Activated CD4-positive, alpha-beta T cell treated with anti-CD3 and anti-CD28 coated beads for 36 hours (primary cell): ENCODE measurements at regions of chrX and their contacts with region 1.

Region 1: GRCh38 chrX:48957827-48958634 is 624 bp upstream of the OTUD5 start:
- DNase-seq: peak; percentile 95
- ATAC-seq: peak; percentile 92
- H3K4me3 Mint-ChIP-seq: peak overlapping the region; percentile 93
- H3K27ac Mint-ChIP-seq: peak overlapping the region; percentile 100
- H3K4me1 Mint-ChIP-seq: peaks cover 28% of the 10 kb centered on the region
- H3K27me3 Mint-ChIP-seq: no peaks in the 10 kb centered on the region

Region 2: GRCh38 chrX:48676106-48676892 is 281.7 kb before region 1 on chrX:
- CTCF ChIA-PET with region 1: no interaction called
- POLR2A ChIA-PET with region 1: interaction called, 3 read pairs
- intact Hi-C with region 1: loop called in 1 of 2 experiments (anchors 5 kb)
- DNase-seq: peak; percentile 92
- ATAC-seq: peak; percentile 95
- H3K4me3 Mint-ChIP-seq: peak overlapping the region; percentile 90
- H3K27ac Mint-ChIP-seq: peak overlapping the region; percentile 91
- H3K4me1 Mint-ChIP-seq: peaks cover 19% of the 10 kb centered on the region
- H3K27me3 Mint-ChIP-seq: no peaks in the 10 kb centered on the region

Region 3: DNA sequence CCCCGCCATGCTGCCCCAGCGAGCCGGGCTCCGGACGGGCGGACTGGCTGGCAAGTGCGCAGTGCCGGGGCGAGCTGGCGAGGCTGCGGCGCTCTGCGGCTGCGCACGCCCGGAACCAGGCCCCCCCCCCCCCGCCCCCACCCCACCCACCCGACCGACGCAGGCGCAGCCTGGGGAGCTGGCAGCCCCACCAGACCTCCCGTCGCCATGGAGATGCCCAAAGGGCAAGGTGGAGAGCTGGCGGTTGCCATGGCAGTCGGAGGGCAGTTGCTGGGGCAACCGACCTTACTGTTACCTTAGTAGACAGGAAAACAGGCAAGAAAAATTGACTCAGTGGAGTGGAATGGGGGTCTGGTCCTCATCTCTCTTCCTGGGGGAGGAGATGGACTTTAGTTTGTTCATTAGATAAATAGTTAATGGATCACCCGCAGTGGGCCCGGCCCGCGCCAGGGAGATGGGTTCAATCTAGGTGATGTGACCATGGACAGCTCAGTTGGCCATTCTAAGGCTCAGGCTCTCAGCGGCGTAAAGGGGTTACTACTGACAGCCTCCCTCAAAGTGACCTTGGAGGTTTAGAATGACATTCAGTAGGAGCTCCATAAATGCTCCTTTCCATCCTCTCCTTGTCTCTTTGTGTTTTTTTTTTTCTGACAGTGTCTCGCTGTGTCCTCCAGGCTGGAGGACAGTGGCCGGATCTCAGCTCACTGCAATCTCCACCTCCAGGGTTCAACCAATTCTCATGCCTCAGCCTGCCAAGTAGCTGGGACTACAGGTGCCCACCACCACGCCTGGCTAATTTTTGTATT is 122.3 kb before region 1 on chrX and contains the start of gene PCSK1N:
- CTCF ChIA-PET with region 1: no interaction called
- POLR2A ChIA-PET with region 1: no interaction called
- intact Hi-C with region 1: no loop called
- DNase-seq: peak; percentile 38
- ATAC-seq: peak; percentile 28
- H3K4me3 Mint-ChIP-seq: peak within 1 kb of the TSS; percentile 75
- H3K27ac Mint-ChIP-seq: peak within 1 kb of the TSS; percentile 6
- H3K4me1 Mint-ChIP-seq: peaks cover 13% of the 10 kb centered on the region
- H3K27me3 Mint-ChIP-seq: peaks cover 26% of the 10 kb centered on the region
- total RNA-seq, gene PCSK1N: 1.3 TPM

Region 4: DNA sequence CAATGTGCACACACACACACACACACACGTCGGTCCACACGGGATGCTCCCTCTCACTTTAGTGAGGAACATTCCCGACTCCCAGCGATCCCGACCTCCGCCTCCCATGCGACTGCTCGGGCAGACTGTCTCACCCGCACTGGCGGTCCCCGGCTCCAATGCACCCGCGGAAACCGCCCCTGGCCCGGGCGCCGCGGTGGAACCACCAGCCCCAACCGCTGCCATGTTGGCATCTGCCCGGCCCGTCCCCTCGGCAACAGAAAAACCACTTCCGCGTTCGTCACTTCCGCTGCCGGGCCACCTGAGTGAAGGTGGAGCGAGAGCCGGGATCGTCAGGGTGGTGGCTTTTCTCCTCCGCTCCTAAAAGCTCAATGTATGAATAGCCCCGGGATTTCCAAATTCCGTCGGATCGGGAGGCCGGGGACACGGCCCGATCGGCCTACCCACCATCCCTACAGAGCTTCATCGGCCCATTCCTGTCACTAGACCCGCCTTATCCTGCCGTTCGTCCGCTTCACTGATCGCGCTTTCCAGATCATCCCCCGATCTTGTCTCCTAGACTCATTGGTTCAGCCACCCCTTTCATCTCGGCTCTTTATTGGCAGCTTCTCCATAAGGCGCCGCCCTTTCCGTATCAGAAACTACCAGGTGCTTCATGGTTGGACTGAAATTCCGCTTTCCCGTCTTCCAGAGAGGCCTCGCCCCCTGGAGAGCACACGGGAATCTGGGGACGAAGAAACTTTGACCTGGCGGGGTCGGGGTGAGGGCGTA is 46.4 kb before region 1 on chrX and contains the start of gene SLC35A2:
- CTCF ChIA-PET with region 1: no interaction called
- POLR2A ChIA-PET with region 1: interaction called, 7 read pairs
- intact Hi-C with region 1: loop called in 1 of 2 experiments (anchors 1 kb)
- DNase-seq: peak; percentile 93
- ATAC-seq: peak; percentile 69
- H3K4me3 Mint-ChIP-seq: peak within 1 kb of the TSS; percentile 97
- H3K27ac Mint-ChIP-seq: peak within 1 kb of the TSS; percentile 92
- H3K4me1 Mint-ChIP-seq: peaks cover 39% of the 10 kb centered on the region
- H3K27me3 Mint-ChIP-seq: no peaks in the 10 kb centered on the region
- total RNA-seq, gene SLC35A2: 19.7 to 20.3 TPM

Region 5: GRCh38 chrX:48937054-48937907 is 20.8 kb before region 1 on chrX:
- CTCF ChIA-PET with region 1: interaction called, 3 read pairs
- POLR2A ChIA-PET with region 1: interaction called, 27 read pairs
- intact Hi-C with region 1: loop called in 1 of 2 experiments (anchors 1 kb)
- DNase-seq: peak; percentile 93
- ATAC-seq: peak; percentile 61
- H3K4me3 Mint-ChIP-seq: peak overlapping the region; percentile 64
- H3K27ac Mint-ChIP-seq: peak overlapping the region; percentile 96
- H3K4me1 Mint-ChIP-seq: peaks cover 81% of the 10 kb centered on the region
- H3K27me3 Mint-ChIP-seq: no peaks in the 10 kb centered on the region

Region 6: GRCh38 chrX:49073601-49074571 is 115.9 kb after region 1 on chrX and contains the start of gene PRAF2:
- CTCF ChIA-PET with region 1: no interaction called
- POLR2A ChIA-PET with region 1: no interaction called
- intact Hi-C with region 1: loop called in 1 of 2 experiments (anchors 1 kb)
- DNase-seq: peak; percentile 94
- ATAC-seq: peak; percentile 98
- H3K4me3 Mint-ChIP-seq: peak within 1 kb of the TSS; percentile 78
- H3K27ac Mint-ChIP-seq: peak within 1 kb of the TSS; percentile 73
- H3K4me1 Mint-ChIP-seq: peaks cover 19% of the 10 kb centered on the region
- H3K27me3 Mint-ChIP-seq: no peaks in the 10 kb centered on the region
- total RNA-seq, gene PRAF2: 9.1 to 11.5 TPM